ENCODE measurements at regions of chr10 and their contacts with region 1.

Region 1: DNA sequence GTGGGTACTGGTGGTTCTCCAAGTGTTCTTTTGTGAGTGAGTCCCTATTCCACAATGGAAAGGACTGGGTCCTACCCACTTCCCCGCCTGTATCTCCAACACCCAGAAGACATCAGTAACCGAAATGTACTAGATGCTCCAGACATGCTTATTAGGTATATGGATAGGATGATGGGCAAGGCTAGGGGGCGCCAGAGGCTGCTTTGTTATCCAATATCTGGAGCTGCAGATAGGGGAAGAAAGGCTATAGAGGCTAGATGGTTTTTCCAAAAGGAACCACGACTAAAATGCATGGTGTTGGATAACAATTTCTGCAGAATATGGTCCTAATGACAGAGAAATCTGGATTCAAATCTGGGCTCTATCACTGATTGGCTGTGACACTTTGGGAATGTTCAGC is 56.2 kb upstream of the TM9SF3 start:
- DNase-seq: peak; percentile 31 to 78 (median 46)
- ATAC-seq: peak; percentile 93
- H3K4me3 ChIP-seq: no peak overlapping the region
- H3K27ac ChIP-seq: no peak overlapping the region
- H3K4me1 ChIP-seq: peaks cover 0 to 3% of the 10 kb centered on the region in 2 experiments; a peak in 2 of 5 replicates
- H3K27me3 ChIP-seq: no peaks in the 10 kb centered on the region; a peak in 1 of 5 replicates
- CTCF ChIP-seq: peak; percentile 69 to 86 (median 85)
- EP300 ChIP-seq: no peak
- POLR2A ChIP-seq: no peak
- RAD21 ChIP-seq: peak; percentile 81 to 84

Region 2: DNA sequence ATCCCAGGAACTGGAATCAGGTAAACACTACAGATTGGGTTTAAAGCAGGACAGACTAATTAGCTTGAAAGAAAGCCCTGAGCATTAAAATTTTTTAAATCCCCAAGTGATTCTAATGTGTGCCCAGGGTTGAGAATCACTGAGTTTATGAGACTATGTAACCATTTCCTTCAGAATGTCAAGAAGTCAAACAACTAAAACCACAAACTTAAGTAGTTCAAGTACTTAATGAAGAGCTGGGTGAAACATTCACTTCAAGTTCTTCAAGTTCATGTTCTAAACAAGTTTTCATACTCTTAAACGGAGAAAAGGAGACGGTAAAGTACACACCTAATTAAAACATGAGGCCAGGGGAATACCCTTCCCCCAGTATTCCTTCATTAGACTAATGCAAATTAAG is 101.1 kb before region 1 on chr10:
- CTCF ChIA-PET with region 1: no interaction called
- POLR2A ChIA-PET with region 1: no interaction called
- in situ Hi-C with region 1: no loop called
- intact Hi-C with region 1: no loop called
- DNase-seq: no peak
- ATAC-seq: no peak
- H3K4me3 ChIP-seq: no peak overlapping the region
- H3K27ac ChIP-seq: no peak overlapping the region
- H3K4me1 ChIP-seq: no peaks in the 10 kb centered on the region
- H3K27me3 ChIP-seq: no peaks in the 10 kb centered on the region
- CTCF ChIP-seq: no peak
- EP300 ChIP-seq: no peak
- POLR2A ChIP-seq: no peak
- RAD21 ChIP-seq: no peak

Region 3: GRCh38 chr10:96570983-96571964 is 71.7 kb before region 1 on chr10:
- CTCF ChIA-PET with region 1: no interaction called
- POLR2A ChIA-PET with region 1: no interaction called
- in situ Hi-C with region 1: no loop called
- intact Hi-C with region 1: no loop called
- DNase-seq: no peak
- ATAC-seq: no peak
- H3K4me3 ChIP-seq: no peak overlapping the region
- H3K27ac ChIP-seq: no peak overlapping the region
- H3K4me1 ChIP-seq: no peaks in the 10 kb centered on the region; a peak in 3 of 5 replicates
- H3K27me3 ChIP-seq: no peaks in the 10 kb centered on the region
- CTCF ChIP-seq: no peak
- EP300 ChIP-seq: no peak
- POLR2A ChIP-seq: no peak
- RAD21 ChIP-seq: no peak

Region 4: DNA sequence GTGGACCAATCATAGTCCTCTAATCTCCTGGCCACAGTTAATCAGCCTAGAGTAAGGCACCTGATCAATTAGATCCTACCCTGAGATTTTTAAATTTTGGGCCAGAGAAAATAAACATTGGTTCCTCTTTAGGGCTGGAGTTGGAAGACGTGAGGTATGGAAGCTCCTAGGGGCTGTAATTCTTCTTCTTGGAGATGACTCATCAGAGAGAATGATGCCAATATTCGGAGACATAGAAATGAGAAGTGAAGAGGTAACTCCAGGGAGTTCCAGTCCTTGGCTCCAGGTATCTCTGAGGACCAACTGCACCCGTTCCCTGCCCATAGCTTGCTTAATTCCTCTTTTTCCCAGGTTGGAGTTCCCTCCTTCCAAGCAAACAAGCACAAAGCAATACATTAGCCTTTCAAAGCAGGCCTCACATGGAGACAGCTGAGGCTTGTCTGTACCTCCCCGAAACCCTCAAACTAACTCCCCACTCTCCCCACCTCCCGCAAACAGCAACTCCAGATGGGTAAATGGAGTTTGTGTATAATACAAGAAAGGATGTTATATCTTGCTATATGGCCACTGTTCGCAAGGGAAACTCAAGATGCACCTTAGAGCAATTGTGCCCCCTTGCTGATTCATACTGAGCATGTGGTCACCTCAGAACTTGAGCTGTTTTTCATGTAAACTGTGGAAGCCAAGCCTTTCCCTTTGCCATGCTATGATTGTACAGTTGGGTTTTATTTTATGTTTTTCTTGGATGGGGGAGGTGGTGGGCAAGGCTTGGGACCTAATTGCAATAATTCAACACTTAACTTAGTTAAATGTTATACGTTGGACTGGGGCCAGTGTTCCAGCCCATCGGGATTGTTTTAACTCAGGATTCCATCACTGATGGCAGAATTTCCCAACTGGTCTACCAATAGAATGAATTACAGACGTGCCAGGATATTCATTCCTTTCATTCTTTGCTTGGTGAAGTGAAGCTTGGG is 48.1 kb after region 1 on chr10:
- CTCF ChIA-PET with region 1: no interaction called
- POLR2A ChIA-PET with region 1: interaction called, 4 read pairs
- in situ Hi-C with region 1: no loop called
- intact Hi-C with region 1: loop called (anchors 5 kb)
- DNase-seq: no peak
- ATAC-seq: no peak
- H3K4me3 ChIP-seq: no peak overlapping the region
- H3K27ac ChIP-seq: no peak overlapping the region
- H3K4me1 ChIP-seq: peaks cover 0 to 17% of the 10 kb centered on the region in 2 experiments; a peak in 3 of 5 replicates
- H3K27me3 ChIP-seq: no peaks in the 10 kb centered on the region
- CTCF ChIP-seq: peak; percentile 10 to 38 (median 13); a peak in 1 of 6 replicates
- EP300 ChIP-seq: no peak
- POLR2A ChIP-seq: no peak
- RAD21 ChIP-seq: peak in 1 of 2 experiments; percentile 45; a peak in 2 of 4 replicates

Region 5: GRCh38 chr10:96826438-96826837 is 183.5 kb after region 1 on chr10:
- CTCF ChIA-PET with region 1: no interaction called
- POLR2A ChIA-PET with region 1: interaction called, 3 read pairs
- in situ Hi-C with region 1: loop called (anchors 5 kb)
- intact Hi-C with region 1: loop called (anchors 1 kb)
- DNase-seq: no peak
- ATAC-seq: no peak
- H3K4me3 ChIP-seq: no peak overlapping the region
- H3K27ac ChIP-seq: no peak overlapping the region
- H3K4me1 ChIP-seq: peaks cover 3 to 20% of the 10 kb centered on the region in 2 experiments; a peak in 3 of 5 replicates
- H3K27me3 ChIP-seq: no peaks in the 10 kb centered on the region
- CTCF ChIP-seq: no peak
- EP300 ChIP-seq: no peak
- POLR2A ChIP-seq: no peak
- RAD21 ChIP-seq: no peak

Region 6: DNA sequence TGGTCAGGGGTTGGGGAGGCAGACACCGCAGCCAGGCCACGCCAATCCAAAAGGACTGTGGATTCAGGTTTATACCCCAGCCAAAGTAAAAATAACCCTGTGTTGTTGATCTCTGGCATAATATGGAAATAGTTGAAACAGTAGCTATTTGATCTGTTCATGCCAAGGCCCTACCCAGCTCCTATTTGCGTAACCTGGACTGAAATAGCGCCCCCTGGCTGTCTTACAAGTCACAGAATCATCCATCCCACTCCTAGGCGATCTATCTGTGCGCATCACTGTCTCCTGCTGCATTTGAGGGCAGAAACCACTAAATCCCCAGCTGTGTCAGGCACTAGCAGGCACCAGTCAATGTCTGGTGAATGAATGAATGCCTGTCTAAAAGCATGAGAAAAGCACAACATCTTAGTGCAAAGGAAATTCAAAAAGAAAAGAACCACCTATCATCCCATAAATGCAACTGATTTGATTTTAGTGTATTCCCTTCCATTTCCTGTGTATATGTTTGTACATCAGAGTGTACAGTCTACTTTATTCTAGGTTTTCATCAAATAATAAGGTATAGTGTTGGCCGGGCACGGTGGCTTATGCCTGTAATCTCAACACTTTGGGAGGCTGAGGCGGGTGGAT is 382.8 kb after region 1 on chr10:
- CTCF ChIA-PET with region 1: interaction called, 3 read pairs
- POLR2A ChIA-PET with region 1: no interaction called
- in situ Hi-C with region 1: loop called (anchors 10 kb)
- intact Hi-C with region 1: loop called (anchors 10 kb)
- DNase-seq: peak; percentile 52 to 65 (median 57)
- ATAC-seq: peak; percentile 94
- H3K4me3 ChIP-seq: no peak overlapping the region
- H3K27ac ChIP-seq: no peak overlapping the region
- H3K4me1 ChIP-seq: peaks cover 0 to 4% of the 10 kb centered on the region in 2 experiments; a peak in 2 of 5 replicates
- H3K27me3 ChIP-seq: peaks cover 9 to 29% of the 10 kb centered on the region in 2 experiments; a peak in 4 of 5 replicates
- CTCF ChIP-seq: peak; percentile 64 to 73 (median 73)
- EP300 ChIP-seq: no peak
- POLR2A ChIP-seq: no peak
- RAD21 ChIP-seq: peak in 1 of 2 experiments; percentile 63; a peak in 2 of 4 replicates

Measured in K562 (cell line).